Panc1 (cell line): ENCODE measurements at regions of chr1 and their contacts with region 1.

Region 1: DNA sequence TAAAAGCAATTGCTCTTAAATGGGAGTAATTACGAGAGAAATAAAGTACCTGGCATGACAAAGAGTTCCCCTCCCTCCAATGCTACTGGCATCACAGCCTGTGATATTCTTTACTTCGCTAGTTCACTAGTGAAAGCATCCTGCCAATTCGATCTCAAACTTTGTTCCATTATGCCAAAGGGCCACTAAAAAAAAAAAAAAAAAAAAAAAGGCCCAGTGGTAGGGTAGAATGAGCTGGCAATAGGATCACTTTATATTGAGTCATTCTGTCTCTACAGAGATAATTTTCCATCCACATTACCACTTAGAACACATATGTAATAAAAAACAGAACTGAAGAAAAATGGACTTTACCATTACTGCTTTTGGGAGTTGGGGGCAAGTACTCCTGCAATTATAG is 11.2 kb downstream of the PUM1 start:
- DNase-seq: no peak
- ATAC-seq: no peak
- H3K4me3 ChIP-seq: no peak overlapping the region
- H3K27ac ChIP-seq: no peak overlapping the region
- H3K4me1 ChIP-seq: no peaks in the 10 kb centered on the region
- H3K27me3 ChIP-seq: no peaks in the 10 kb centered on the region
- CTCF ChIP-seq: no peak

Region 2: GRCh38 chr1:30727824-30728223 is 326.5 kb before region 1 on chr1:
- CTCF ChIA-PET with region 1: no interaction called
- POLR2A ChIA-PET with region 1: interaction called, 12 read pairs
- in situ Hi-C with region 1: no loop called
- intact Hi-C with region 1: no loop called
- DNase-seq: no peak
- ATAC-seq: no peak
- H3K4me3 ChIP-seq: no peak overlapping the region
- H3K27ac ChIP-seq: no peak overlapping the region
- H3K4me1 ChIP-seq: no peaks in the 10 kb centered on the region; the same call in 1 of the 2 replicates
- H3K27me3 ChIP-seq: no peaks in the 10 kb centered on the region
- CTCF ChIP-seq: no peak

Region 3: DNA sequence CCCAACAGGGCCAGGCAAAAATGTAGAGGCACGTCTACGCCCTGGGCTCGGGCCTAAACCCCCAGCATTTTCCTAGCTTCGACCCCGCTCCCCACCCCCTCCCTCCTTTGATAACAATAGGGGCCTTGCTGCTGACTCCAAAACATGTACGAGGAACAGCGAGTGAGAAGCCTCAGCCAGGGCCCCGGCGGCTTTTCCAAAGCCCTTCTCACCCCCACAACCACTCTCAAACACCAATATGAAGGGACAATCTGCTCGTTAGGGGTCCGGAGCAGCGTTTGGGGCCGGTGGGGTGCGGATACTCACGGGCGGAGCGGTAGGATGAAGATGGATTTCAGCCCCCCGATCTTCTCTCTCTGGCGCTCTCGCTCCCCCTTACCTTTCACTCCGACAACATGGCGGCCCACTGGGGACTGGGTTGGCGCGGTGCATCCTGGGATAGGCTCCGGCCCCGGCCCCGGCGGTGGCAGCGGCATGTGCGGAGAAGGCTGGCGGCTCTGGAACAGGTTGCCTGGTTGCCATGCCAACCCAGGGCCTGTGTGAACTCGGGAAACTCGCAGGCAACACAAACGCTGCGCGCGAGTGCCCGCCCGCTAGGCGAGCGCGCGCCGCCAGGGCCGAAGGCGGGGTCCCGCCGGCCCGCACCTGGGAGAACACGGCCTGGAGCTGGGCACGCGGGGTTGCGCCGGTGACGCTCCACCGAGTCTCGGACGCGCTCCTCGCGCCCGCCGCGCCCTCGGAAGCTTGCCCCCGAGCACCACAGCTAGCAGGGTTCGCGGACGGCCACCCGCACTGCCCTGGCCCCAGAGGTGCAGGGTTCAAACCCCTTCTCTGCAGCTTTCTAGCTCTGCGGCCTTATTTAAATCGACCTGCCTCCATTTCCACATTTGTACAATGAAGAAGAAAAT is 11.2 kb after region 1 on chr1 and contains the start of gene PUM1:
- CTCF ChIA-PET with region 1: no interaction called
- POLR2A ChIA-PET with region 1: interaction called, 10 read pairs
- in situ Hi-C with region 1: no loop called
- intact Hi-C with region 1: no loop called
- DNase-seq: peak; percentile 81
- ATAC-seq: peak; percentile 99
- H3K4me3 ChIP-seq: peak within 1 kb of the TSS; percentile 90 to 98
- H3K27ac ChIP-seq: peak within 1 kb of the TSS; percentile 99
- H3K4me1 ChIP-seq: peaks cover 16% of the 10 kb centered on the region; the same call in 1 of the 2 replicates
- H3K27me3 ChIP-seq: no peaks in the 10 kb centered on the region
- CTCF ChIP-seq: no peak
- total RNA-seq, gene PUM1: 109 TPM